ENCODE measurements at regions of chr18 and their contacts with region 1.

Region 1: GRCh38 chr18:79378542-79379250 is 17.0 kb upstream of the NFATC1 start:
- DNase-seq: peak in 1 of 2 donors; percentile 68
- ATAC-seq: peak; percentile 69 to 72
- H3K4me3 ChIP-seq: no peak overlapping the region
- H3K27ac ChIP-seq: no peak overlapping the region
- H3K4me1 ChIP-seq: peaks cover 0 to 3% of the 10 kb centered on the region in 2 donors
- H3K27me3 ChIP-seq: no peaks in the 10 kb centered on the region
- CTCF ChIP-seq: peak; percentile 83 to 97 (median 95)
- POLR2A ChIP-seq: no peak

Region 2: GRCh38 chr18:79353267-79353666 is 25.4 kb before region 1 on chr18:
- in situ Hi-C with region 1: no loop called
- intact Hi-C with region 1: no loop called
- DNase-seq: no peak
- ATAC-seq: no peak
- H3K4me3 ChIP-seq: no peak overlapping the region
- H3K27ac ChIP-seq: no peak overlapping the region
- H3K4me1 ChIP-seq: no peaks in the 10 kb centered on the region
- H3K27me3 ChIP-seq: no peaks in the 10 kb centered on the region
- CTCF ChIP-seq: no peak
- POLR2A ChIP-seq: no peak

Region 3: GRCh38 chr18:79644006-79644665 is 265.4 kb after region 1 on chr18:
- in situ Hi-C with region 1: loop called (anchors 5 kb)
- intact Hi-C with region 1: loop called (anchors 1 kb)
- DNase-seq: peak in 1 of 2 donors; percentile 26
- ATAC-seq: peak; percentile 44 to 65
- H3K4me3 ChIP-seq: no peak overlapping the region
- H3K27ac ChIP-seq: no peak overlapping the region
- H3K4me1 ChIP-seq: peaks cover 0 to 4% of the 10 kb centered on the region in 2 donors
- H3K27me3 ChIP-seq: no peaks in the 10 kb centered on the region
- CTCF ChIP-seq: peak; percentile 83 to 97 (median 91)
- POLR2A ChIP-seq: no peak

Region 4: DNA sequence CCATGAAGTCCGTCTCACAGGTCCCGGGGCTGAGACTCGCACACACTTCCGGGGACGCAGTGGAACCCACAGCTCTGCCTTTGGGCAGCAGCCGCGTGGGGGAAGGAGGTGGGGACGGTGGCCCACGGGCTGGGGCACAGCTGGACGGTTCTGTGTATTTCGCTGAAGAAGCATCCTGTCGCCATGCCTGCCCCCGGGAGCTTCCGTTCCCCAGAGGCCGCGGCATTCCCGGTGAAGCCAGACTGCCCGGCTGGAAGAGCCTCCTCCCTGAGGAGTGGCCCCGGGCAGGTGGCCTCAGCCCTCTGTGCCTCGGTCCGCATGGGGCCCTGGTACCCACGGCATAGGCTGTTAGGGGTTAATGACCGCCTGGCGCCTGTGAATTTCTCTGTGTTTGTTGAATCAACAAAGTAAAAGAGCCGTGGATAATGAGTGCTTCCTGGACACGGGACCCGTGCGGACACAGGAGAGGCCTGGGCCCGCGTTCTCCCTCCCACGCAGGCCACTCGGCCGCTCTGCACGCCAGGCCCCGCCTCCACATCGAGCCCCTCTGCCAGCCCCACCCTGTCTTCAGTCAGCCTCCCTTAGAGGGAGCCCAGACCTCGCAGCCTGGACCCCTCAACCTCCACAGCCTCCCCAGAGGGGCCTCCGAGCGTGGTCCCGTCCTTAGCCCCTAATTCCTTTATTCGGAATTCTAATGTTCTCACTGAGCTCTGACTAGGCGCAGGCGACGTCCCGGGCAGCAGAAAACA is 470.1 kb after region 1 on chr18:
- in situ Hi-C with region 1: no loop called
- intact Hi-C with region 1: no loop called
- DNase-seq: no peak
- ATAC-seq: no peak
- H3K4me3 ChIP-seq: no peak overlapping the region
- H3K27ac ChIP-seq: no peak overlapping the region
- H3K4me1 ChIP-seq: no peaks in the 10 kb centered on the region
- H3K27me3 ChIP-seq: peaks cover 2 to 7% (median 5%) of the 10 kb centered on the region in 3 donors
- CTCF ChIP-seq: no peak
- POLR2A ChIP-seq: no peak

Measured in gastrocnemius medialis (tissue), 4 donors.